MCF 10A (cell line): ENCODE measurements at regions of chr9 and their contacts with region 1.

Region 1: GRCh38 chr9:98118640-98119601 is at the start of gene TRIM14:
- DNase-seq: peak; percentile 70
- H3K4me3 Mint-ChIP-seq: peak within 1 kb of the TSS; percentile 74
- H3K27ac Mint-ChIP-seq: peak within 1 kb of the TSS; percentile 34
- H3K4me1 Mint-ChIP-seq: peaks cover 22% of the 10 kb centered on the region
- H3K27me3 Mint-ChIP-seq: no peaks in the 10 kb centered on the region
- CTCF ChIP-seq: no peak
- total RNA-seq, gene TRIM14: 15.8 and 17.9 TPM in 2 replicates

Region 2: GRCh38 chr9:97617939-97618416 is 500.9 kb before region 1 on chr9:
- CTCF ChIA-PET with region 1: no interaction called
- POLR2A ChIA-PET with region 1: no interaction called
- intact Hi-C with region 1: no loop called
- DNase-seq: no peak
- H3K4me3 Mint-ChIP-seq: no peak overlapping the region
- H3K27ac Mint-ChIP-seq: no peak overlapping the region
- H3K4me1 Mint-ChIP-seq: peaks cover 7% of the 10 kb centered on the region
- H3K27me3 Mint-ChIP-seq: no peaks in the 10 kb centered on the region
- CTCF ChIP-seq: no peak

Region 3: GRCh38 chr9:98146101-98146991 is 27.4 kb after region 1 on chr9:
- CTCF ChIA-PET with region 1: interaction called, 18 read pairs
- POLR2A ChIA-PET with region 1: interaction called, 21 read pairs
- intact Hi-C with region 1: no loop called
- DNase-seq: peak; percentile 92
- H3K4me3 Mint-ChIP-seq: peak overlapping the region; percentile 8
- H3K27ac Mint-ChIP-seq: peak overlapping the region; percentile 98
- H3K4me1 Mint-ChIP-seq: peaks cover 38% of the 10 kb centered on the region
- H3K27me3 Mint-ChIP-seq: no peaks in the 10 kb centered on the region
- CTCF ChIP-seq: no peak

Region 4: DNA sequence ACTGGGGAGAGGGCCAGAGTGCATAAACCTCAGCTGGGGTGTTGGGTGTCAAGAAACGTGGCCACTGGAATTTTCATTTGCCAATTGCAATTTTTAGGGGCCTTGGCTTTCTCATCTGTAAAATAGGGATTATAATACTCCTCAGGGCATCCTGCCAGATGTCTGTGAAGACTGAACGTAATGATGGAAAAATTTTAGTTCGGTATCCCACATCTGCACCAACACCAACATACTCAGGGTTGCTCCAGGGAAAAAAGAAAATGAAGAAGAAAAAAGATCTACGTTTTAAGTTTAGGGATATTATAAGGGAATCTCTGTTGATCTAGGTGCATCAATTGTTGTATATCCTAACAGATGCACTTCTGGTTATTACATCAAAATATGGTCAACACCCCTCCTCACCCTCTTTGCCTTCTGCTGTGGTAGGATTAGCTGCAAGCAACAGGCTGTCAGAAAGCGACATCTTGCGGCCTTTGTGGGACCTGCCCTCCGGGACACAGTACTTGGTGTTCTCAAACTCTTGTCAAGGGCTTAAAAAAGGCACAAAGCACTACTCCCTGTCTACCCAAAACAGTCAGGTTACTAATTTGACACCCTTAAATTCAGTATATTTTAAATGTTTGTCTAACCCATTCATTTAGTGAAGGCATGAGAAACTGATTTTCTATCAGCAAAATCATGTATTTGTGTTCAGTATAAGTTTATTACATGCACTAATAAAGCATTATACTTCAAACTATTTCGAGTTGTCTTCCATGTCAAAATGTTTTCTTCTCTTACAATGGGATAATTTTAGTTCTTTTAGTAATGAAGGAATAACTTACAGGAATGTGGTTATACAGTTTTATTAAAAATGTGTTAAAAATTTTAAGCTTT is 144.8 kb after region 1 on chr9:
- CTCF ChIA-PET with region 1: interaction called, 4 read pairs
- POLR2A ChIA-PET with region 1: interaction called, 3 read pairs
- intact Hi-C with region 1: loop called (anchors 1 kb)
- DNase-seq: peak; percentile 83
- H3K4me3 Mint-ChIP-seq: no peak overlapping the region
- H3K27ac Mint-ChIP-seq: no peak overlapping the region
- H3K4me1 Mint-ChIP-seq: peaks cover 14% of the 10 kb centered on the region
- H3K27me3 Mint-ChIP-seq: no peaks in the 10 kb centered on the region
- CTCF ChIP-seq: peak; percentile 96